ENCODE measurements at regions of chrX and their contacts with region 1.

Region 1: GRCh38 chrX:103464774-103465117 is 54.5 kb downstream of the RAB40A start:
- DNase-seq: no peak
- H3K4me3 ChIP-seq: peak overlapping the region; percentile 9 to 55 (median 30)
- H3K27ac ChIP-seq: no peak overlapping the region
- H3K4me1 ChIP-seq: peaks cover 0 to 6% (median 0%) of the 10 kb centered on the region in 3 donors
- H3K27me3 ChIP-seq: no peaks in the 10 kb centered on the region
- CTCF ChIP-seq: peak in 5 of 6 experiments; percentile 58 to 73 (median 68)
- POLR2A ChIP-seq: no peak

Region 2: DNA sequence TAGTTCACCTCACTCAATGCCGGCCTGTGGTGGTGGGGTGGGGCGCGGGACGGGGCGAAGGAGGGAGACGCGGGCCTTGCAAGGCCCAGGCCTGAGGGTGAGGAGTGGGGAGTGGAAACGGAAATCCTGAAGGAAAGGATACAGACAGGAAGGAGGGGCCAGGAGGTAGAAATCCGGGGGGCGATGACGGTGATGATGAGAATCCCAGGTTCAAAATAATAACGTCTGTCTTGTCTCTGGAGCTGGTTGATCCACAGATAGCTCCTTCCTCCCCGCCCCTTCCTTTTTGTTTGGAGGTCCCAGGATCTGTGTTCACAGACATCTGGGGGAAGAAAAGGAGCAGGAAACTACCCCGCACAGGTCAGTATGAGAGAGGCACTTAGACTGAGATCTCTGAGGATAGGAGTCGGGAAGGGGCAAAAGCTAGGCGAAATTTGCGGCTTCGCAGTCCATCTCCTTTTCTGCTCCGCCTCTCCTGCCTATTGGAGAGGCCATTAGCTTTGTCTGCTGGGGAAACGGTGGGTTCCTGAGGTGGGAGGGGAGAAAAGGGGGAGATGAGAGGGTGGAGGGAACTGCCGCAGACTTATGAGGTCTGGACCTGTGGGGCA is 134.0 kb before region 1 on chrX:
- intact Hi-C with region 1: no loop called
- DNase-seq: no peak
- H3K4me3 ChIP-seq: peak overlapping the region in 3 of 4 donors; percentile 28 to 48 (median 31)
- H3K27ac ChIP-seq: no peak overlapping the region
- H3K4me1 ChIP-seq: peaks cover 0 to 7% (median 0%) of the 10 kb centered on the region in 3 donors
- H3K27me3 ChIP-seq: no peaks in the 10 kb centered on the region
- CTCF ChIP-seq: no peak
- POLR2A ChIP-seq: no peak

Region 3: GRCh38 chrX:103343105-103343504 is 121.6 kb before region 1 on chrX:
- intact Hi-C with region 1: loop called (anchors 5 kb)
- DNase-seq: no peak
- H3K4me3 ChIP-seq: no peak overlapping the region
- H3K27ac ChIP-seq: no peak overlapping the region
- H3K4me1 ChIP-seq: no peaks in the 10 kb centered on the region
- H3K27me3 ChIP-seq: peaks cover 0 to under 1% (median 0%) of the 10 kb centered on the region in 4 donors
- CTCF ChIP-seq: peak; percentile 25 to 70 (median 60)
- POLR2A ChIP-seq: no peak

Region 4: GRCh38 chrX:103585411-103586313 is 120.9 kb after region 1 on chrX and contains the start of gene TCEAL4:
- intact Hi-C with region 1: no loop called
- DNase-seq: no peak
- H3K4me3 ChIP-seq: peak within 1 kb of the TSS; percentile 49 to 73 (median 66)
- H3K27ac ChIP-seq: peak within 1 kb of the TSS; percentile 84 to 90 (median 88)
- H3K4me1 ChIP-seq: peaks cover 0 to 11% (median 0%) of the 10 kb centered on the region in 3 donors
- H3K27me3 ChIP-seq: no peaks in the 10 kb centered on the region
- CTCF ChIP-seq: no peak
- POLR2A ChIP-seq: peak in 2 of 4 donors; percentile 17 to 57
- total RNA-seq, gene TCEAL4: 9.8 to 143 (median 36.8) TPM

Region 5: GRCh38 chrX:103629318-103630170 is 164.8 kb after region 1 on chrX:
- intact Hi-C with region 1: no loop called
- DNase-seq: no peak
- H3K4me3 ChIP-seq: peak overlapping the region; percentile 47 to 74 (median 67)
- H3K27ac ChIP-seq: peak overlapping the region; percentile 82 to 94 (median 89)
- H3K4me1 ChIP-seq: peaks cover 0 to 18% (median 0%) of the 10 kb centered on the region in 3 donors
- H3K27me3 ChIP-seq: no peaks in the 10 kb centered on the region
- CTCF ChIP-seq: peak in 2 of 6 experiments; percentile 11 to 28
- POLR2A ChIP-seq: no peak

Region 6: DNA sequence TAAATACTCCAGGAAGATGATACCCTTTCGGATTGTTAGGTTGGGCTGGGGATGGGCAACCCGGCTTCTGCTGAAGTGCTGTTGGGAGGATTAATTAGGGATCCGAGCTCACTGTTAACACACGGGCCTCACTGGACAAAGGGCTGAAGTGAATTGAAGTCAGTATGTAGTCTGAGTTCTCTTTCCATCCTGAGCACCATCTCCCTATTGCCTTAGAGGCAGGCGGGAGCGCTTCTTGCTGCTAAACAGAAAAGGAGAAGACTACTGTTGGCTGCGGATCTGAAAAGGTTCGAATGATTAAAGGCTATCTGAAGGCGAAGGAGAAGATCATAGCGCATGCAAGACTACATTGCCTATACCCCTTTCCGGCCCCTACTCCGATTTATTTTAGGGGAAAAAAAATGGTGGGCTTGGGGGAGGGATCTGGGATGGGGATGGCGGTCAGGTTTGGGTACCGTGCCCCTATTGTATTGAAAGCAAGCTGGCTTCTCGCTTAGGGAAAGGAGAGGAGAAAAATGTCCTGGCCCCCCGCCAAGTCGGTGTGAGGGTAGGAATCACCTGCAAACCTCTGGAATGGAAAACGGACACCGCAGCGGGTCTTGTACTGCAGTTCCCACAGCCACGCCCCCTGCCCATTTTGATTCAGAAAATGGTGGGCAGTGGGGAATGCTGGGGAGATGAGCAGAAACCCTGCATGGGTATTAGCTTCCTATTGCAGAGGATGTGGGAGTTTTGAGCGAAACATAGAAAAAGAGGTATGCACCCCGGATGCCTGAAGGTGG is 199.4 kb after region 1 on chrX:
- intact Hi-C with region 1: no loop called
- DNase-seq: no peak
- H3K4me3 ChIP-seq: no peak overlapping the region
- H3K27ac ChIP-seq: no peak overlapping the region
- H3K4me1 ChIP-seq: no peaks in the 10 kb centered on the region
- H3K27me3 ChIP-seq: no peaks in the 10 kb centered on the region
- CTCF ChIP-seq: no peak
- POLR2A ChIP-seq: no peak

Measured in esophagus squamous epithelium (tissue), 5 donors.